Activated CD4-positive, alpha-beta memory T cell treated with anti-CD3 and anti-CD28 coated beads, Interleukin-2, amount 10 ng/mL, durations not matched to agents 7 days and 5 days (primary cell): ENCODE measurements at regions of chr12 and their contacts with region 1.

Region 1: GRCh38 chr12:108562348-108563135 is at the start of gene ISCU:
- DNase-seq: peak; percentile 99
- H3K4me3 Mint-ChIP-seq: peak within 1 kb of the TSS; percentile 100
- H3K27ac Mint-ChIP-seq: peak within 1 kb of the TSS; percentile 99
- H3K4me1 Mint-ChIP-seq: peaks cover 63% of the 10 kb centered on the region
- H3K27me3 Mint-ChIP-seq: no peaks in the 10 kb centered on the region
- total RNA-seq, gene ISCU: 69.9 to 74.1 TPM

Region 2: DNA sequence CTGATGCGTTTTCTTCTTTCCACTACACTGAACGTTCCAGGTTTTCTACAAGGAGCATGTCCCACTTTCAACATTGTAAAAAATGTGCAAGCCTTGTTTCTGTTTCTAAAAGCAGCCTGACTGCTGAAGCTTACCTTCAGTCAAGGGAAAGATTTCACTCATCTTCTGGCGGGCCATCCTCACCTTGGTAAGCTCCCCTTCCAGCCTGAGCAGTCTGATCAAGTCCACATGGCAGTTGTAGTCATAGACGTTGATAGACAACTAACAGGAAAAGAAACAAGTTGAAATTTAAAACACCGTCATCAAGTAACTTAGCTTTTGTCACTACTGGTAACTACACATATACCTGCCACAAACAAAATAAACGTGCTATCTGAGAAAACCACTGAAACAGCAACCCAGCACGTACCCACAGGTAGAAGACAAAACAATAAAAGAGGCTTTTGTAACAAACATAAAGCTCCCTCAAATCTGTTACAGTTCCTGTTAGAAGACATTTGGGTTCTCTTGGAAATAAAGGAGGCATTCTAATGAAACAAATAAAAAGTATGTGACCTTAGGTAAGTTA is 13.5 kb before region 1 on chr12:
- CTCF ChIA-PET with region 1: interaction called, 9 read pairs
- POLR2A ChIA-PET with region 1: interaction called, 16 read pairs
- DNase-seq: no peak
- H3K4me3 Mint-ChIP-seq: no peak overlapping the region
- H3K27ac Mint-ChIP-seq: peak overlapping the region; percentile 19
- H3K4me1 Mint-ChIP-seq: peaks cover 37% of the 10 kb centered on the region
- H3K27me3 Mint-ChIP-seq: no peaks in the 10 kb centered on the region

Region 3: DNA sequence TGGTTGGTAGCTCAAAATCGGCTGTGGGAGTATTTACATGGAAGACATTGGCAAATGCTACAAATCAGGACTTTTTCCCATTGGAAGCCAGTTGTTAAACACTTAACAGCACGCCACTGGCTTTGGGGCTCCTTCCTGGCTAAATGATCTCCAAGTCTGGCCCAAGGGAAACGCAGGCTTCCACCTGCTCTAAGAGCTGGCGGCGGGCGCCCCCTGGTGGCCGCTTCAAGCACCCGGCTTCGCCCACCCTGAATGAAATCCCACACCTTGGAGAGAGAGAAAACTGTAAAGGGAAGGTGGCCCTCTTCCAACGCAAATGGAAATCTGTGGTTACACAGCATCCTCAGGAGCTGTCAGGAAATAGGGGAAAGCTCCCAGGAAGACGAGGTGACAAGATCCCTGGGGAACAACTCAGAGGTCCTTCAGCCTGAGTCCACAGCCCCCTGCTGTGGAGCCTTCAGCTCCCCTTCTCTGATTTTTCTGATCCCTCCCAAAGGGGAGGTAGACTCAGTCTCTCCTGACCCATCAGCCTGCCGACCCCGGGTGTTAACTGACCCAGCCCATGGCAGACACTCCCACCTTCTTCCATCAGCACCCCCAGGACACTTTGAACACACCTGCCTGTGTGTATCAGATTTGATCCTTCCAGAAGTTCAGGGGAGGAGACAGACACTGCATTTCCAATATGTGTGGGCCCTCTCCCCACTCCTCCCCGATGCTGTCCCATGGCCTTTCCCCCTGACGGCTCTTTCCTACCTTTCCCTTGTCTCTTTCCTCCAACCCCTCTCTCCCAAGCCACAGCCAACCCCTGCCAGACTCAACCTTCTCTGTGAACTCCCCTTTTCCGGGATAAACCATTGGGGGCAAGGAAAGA is 55.8 kb after region 1 on chr12:
- CTCF ChIA-PET with region 1: interaction called, 86 read pairs
- POLR2A ChIA-PET with region 1: interaction called, 41 read pairs
- DNase-seq: peak; percentile 75
- H3K4me3 Mint-ChIP-seq: no peak overlapping the region
- H3K27ac Mint-ChIP-seq: peak overlapping the region; percentile 68
- H3K4me1 Mint-ChIP-seq: peaks cover 79% of the 10 kb centered on the region
- H3K27me3 Mint-ChIP-seq: no peaks in the 10 kb centered on the region

Region 4: DNA sequence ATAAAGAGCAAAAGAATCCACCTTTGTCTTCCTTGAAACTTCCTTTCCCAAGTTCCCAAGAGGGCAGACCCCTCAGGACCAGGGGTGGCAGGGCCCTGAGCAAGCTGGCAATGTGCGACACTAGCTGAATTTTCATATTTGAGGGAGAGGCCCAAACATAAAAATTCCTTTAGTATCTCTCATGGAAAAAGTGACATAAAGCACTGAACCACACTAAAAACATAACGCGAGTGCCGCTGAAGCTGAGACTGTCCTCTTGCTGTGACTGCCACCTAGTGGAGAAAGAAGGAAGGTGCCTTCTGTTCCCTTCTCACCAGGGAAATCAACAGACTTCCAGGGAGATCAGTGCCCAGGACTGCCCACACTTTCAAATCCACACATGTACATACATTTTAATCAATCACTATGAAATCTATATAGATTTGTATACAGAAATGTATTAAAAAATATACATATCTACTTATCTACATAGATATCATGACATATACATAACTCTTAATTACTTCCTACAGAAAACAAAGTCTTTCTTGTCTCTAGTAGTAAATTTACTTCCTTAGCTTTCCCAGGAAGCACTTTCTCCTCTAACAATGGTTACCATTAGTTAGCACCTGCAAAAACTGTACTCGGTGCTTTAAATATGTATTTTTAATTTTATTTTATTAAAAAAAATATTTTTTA is 241.0 kb after region 1 on chr12:
- CTCF ChIA-PET with region 1: interaction called, 22 read pairs
- POLR2A ChIA-PET with region 1: interaction called, 5 read pairs
- DNase-seq: peak; percentile 70
- H3K4me3 Mint-ChIP-seq: no peak overlapping the region
- H3K27ac Mint-ChIP-seq: peak overlapping the region; percentile 41
- H3K4me1 Mint-ChIP-seq: peaks cover 10% of the 10 kb centered on the region
- H3K27me3 Mint-ChIP-seq: no peaks in the 10 kb centered on the region